ENCODE measurements at regions of chr17 and their contacts with region 1.

Region 1: DNA sequence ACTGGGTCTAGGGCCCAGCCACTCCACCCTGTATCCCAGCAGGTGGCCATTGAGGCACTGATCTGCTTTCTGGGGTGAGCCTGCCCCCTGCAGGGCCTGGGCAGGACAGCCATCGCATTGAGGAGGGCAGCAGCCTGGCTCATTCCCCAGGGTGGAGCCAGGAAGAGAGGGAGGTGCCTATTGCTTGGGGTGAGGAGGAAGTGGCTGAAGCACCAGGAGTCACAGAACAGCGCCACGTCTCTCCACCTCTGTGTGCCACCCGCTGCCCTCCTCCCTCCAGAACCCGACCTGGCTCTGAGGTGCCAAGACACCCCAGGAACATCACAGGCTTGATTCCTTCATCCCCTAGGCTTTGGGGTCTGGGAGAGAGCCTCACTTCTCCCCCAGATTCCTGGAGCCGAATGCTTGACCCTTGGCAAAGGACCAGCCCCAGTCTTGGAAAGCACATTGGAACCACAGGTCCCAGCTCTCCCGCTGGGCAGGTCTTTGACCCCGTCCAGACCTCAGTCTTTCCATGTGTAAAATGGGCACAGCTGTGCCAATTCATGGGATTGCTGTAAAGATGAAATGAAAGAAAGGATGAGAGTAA is 7.2 kb upstream of the KRT36 start:
- DNase-seq: peak; percentile 88
- H3K4me3 ChIP-seq: no peak overlapping the region
- H3K27ac ChIP-seq: peak overlapping the region; percentile 52
- H3K4me1 ChIP-seq: peaks cover 49% of the 10 kb centered on the region
- H3K27me3 ChIP-seq: no peaks in the 10 kb centered on the region
- CTCF ChIP-seq: peak; percentile 97

Region 2: GRCh38 chr17:40803617-40804082 is 693.3 kb before region 1 on chr17:
- CTCF ChIA-PET with region 1: no interaction called
- dilution Hi-C with region 1: no loop called
- in situ Hi-C with region 1: no loop called
- intact Hi-C with region 1: loop called (anchors 1 kb)
- DNase-seq: peak; percentile 65
- H3K4me3 ChIP-seq: no peak overlapping the region
- H3K27ac ChIP-seq: no peak overlapping the region
- H3K4me1 ChIP-seq: peaks cover 4% of the 10 kb centered on the region
- H3K27me3 ChIP-seq: no peaks in the 10 kb centered on the region
- CTCF ChIP-seq: peak; percentile 89 to 93

Region 3: GRCh38 chr17:40956401-40957254 is 540.3 kb before region 1 on chr17:
- CTCF ChIA-PET with region 1: no interaction called
- dilution Hi-C with region 1: no loop called
- in situ Hi-C with region 1: no loop called
- intact Hi-C with region 1: loop called (anchors 2 kb)
- DNase-seq: peak; percentile 99
- H3K4me3 ChIP-seq: no peak overlapping the region
- H3K27ac ChIP-seq: peak overlapping the region; percentile 99
- H3K4me1 ChIP-seq: peaks cover 75% of the 10 kb centered on the region
- H3K27me3 ChIP-seq: no peaks in the 10 kb centered on the region
- CTCF ChIP-seq: no peak

Region 4: DNA sequence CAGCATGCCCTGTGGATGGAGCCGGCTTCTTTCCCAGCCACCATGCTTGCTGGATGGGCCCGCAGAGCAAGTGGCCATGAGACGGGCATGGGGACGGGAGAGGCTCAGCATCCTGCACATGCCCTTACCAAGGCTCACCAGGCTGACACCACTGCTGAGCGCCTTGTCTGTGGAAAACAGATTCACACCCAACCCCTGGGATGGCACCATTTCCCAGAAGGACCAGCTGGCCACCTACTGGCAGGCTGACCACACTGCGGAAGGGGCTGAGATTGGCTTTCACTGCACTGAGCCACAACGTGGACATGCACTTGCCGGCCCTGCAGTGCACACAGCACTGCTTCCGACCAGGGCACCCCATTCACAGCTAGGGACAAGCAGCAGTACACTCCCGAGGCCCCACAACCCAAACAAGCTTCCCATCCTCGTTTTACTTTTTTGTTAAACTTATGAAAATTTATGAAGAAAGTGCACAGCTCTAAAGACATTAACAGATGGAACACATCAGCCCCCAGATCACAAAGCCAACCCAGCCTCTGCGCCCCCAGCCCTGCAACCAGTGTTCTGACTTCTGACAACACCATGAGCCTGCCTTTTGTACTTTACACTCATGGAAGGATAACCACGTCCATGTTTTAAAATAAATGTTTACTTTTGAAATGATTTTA is 167.5 kb before region 1 on chr17:
- CTCF ChIA-PET with region 1: no interaction called
- dilution Hi-C with region 1: no loop called
- in situ Hi-C with region 1: loop called in 1 of 2 experiments (anchors 10 kb)
- intact Hi-C with region 1: loop called (anchors 1 kb)
- DNase-seq: peak; percentile 52
- H3K4me3 ChIP-seq: no peak overlapping the region
- H3K27ac ChIP-seq: no peak overlapping the region
- H3K4me1 ChIP-seq: peaks cover under 1% of the 10 kb centered on the region
- H3K27me3 ChIP-seq: no peaks in the 10 kb centered on the region
- CTCF ChIP-seq: peak; percentile 88 to 96

Region 5: DNA sequence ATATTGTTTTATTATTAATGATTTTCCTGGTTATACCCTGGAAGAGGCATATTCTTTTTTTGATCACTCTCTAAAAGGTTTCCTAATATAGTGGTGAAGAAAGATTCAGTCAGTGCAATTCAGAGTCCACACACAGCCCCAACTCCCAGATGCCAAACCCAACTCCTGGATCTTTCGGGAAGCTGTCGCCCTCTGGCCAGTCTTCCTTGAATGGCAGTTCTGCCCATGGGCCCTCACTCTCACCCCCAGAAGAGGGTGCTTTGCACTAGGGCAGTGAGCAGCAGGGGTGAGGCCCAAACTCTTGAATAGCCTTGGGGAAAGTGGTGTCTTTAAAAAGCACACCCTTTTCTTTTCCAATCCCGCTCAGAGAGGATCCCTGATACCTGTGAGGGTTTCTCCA is 40.7 kb before region 1 on chr17:
- CTCF ChIA-PET with region 1: no interaction called
- dilution Hi-C with region 1: loop called (anchors 5 kb)
- in situ Hi-C with region 1: no loop called
- intact Hi-C with region 1: no loop called
- DNase-seq: no peak
- H3K4me3 ChIP-seq: no peak overlapping the region
- H3K27ac ChIP-seq: no peak overlapping the region
- H3K4me1 ChIP-seq: peaks cover 8% of the 10 kb centered on the region
- H3K27me3 ChIP-seq: no peaks in the 10 kb centered on the region
- CTCF ChIP-seq: peak in 1 of 2 donors; percentile 50

Region 6: GRCh38 chr17:41811549-41812380 is 314.9 kb after region 1 on chr17 and contains the start of gene P3H4:
- CTCF ChIA-PET with region 1: no interaction called
- dilution Hi-C with region 1: no loop called
- in situ Hi-C with region 1: no loop called
- intact Hi-C with region 1: no loop called
- DNase-seq: peak; percentile 79
- H3K4me3 ChIP-seq: peak within 1 kb of the TSS; percentile 66 to 81 (median 69)
- H3K27ac ChIP-seq: peak within 1 kb of the TSS; percentile 61
- H3K4me1 ChIP-seq: peaks cover 25% of the 10 kb centered on the region
- H3K27me3 ChIP-seq: no peaks in the 10 kb centered on the region
- CTCF ChIP-seq: peak; percentile 39 to 79
- total RNA-seq, gene P3H4: 30.5 to 42.3 TPM

Measured in mammary epithelial cell (primary cell).